Thyroid gland (tissue), 4 donors: ENCODE measurements at regions of chr17 and their contacts with region 1.

Region 1: DNA sequence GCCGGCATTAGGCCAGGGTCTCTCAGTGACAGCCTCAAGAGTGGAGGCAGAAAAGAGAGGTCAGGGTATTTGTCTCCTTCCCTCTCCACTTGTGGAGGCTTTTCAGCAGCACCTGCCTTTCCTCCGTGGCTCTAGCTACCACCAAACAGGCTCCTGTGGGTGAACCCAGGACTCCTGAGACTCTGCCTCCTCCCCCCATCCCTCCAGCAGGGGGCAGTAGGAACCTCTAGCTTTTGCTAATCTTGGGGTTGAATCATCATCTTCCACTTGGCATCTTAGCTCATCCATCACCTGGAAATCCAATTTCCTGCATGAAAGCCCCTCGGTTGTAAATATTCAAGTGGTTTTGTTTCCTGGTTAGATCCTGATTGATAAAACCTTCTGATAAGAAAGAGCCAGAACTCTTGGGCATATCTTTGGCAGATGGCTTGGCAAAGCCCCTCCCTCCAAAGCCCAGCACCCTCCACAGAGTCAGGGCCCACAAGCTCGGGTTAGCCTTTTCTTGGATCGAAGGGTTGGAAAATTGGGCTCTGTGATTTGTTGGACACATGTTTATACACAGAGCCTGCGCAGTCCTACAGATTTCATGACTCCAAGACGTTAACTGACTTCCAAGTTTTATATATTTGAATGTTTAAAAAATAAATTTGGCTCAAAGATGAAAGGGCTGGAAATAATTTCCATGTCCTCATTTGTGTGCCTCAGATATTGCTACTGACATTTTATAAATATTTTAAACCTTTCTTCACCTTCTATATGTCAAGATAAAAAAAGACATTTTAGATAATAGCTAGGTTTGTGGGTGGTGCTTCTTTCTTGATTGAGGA is 322.1 kb downstream of the MAP2K4 start:
- DNase-seq: peak; percentile 44 to 63
- H3K4me3 ChIP-seq: no peak overlapping the region
- H3K27ac ChIP-seq: no peak overlapping the region
- H3K4me1 ChIP-seq: no peaks in the 10 kb centered on the region
- H3K27me3 ChIP-seq: no peaks in the 10 kb centered on the region
- CTCF ChIP-seq: peak in 3 of 6 experiments; percentile 37 to 44 (median 38)
- POLR2A ChIP-seq: no peak

Region 2: GRCh38 chr17:12421646-12422306 is 79.0 kb after region 1 on chr17:
- intact Hi-C with region 1: no loop called
- DNase-seq: no peak
- H3K4me3 ChIP-seq: no peak overlapping the region
- H3K27ac ChIP-seq: peak overlapping the region; percentile 55 to 73 (median 58)
- H3K4me1 ChIP-seq: peaks cover 27 to 33% of the 10 kb centered on the region in 2 donors
- H3K27me3 ChIP-seq: no peaks in the 10 kb centered on the region
- CTCF ChIP-seq: no peak
- POLR2A ChIP-seq: no peak

Region 3: GRCh38 chr17:12566291-12566690 is 223.5 kb after region 1 on chr17:
- intact Hi-C with region 1: no loop called
- DNase-seq: no peak
- H3K4me3 ChIP-seq: no peak overlapping the region
- H3K27ac ChIP-seq: peak overlapping the region in 1 of 3 donors; percentile 43
- H3K4me1 ChIP-seq: peaks cover 0 to 24% of the 10 kb centered on the region in 2 donors
- H3K27me3 ChIP-seq: no peaks in the 10 kb centered on the region
- CTCF ChIP-seq: no peak
- POLR2A ChIP-seq: no peak

Region 4: GRCh38 chr17:12667299-12667958 is 324.6 kb after region 1 on chr17:
- intact Hi-C with region 1: loop called (anchors 10 kb)
- DNase-seq: peak; percentile 8 to 17
- H3K4me3 ChIP-seq: no peak overlapping the region
- H3K27ac ChIP-seq: no peak overlapping the region
- H3K4me1 ChIP-seq: peaks cover 3 to 10% of the 10 kb centered on the region in 2 donors
- H3K27me3 ChIP-seq: peaks cover 3% of the 10 kb centered on the region
- CTCF ChIP-seq: peak in 4 of 6 experiments; percentile 33 to 68 (median 53)
- POLR2A ChIP-seq: no peak

Region 5: GRCh38 chr17:12691182-12691581 is 348.4 kb after region 1 on chr17:
- intact Hi-C with region 1: no loop called
- DNase-seq: no peak
- H3K4me3 ChIP-seq: no peak overlapping the region
- H3K27ac ChIP-seq: no peak overlapping the region
- H3K4me1 ChIP-seq: no peaks in the 10 kb centered on the region
- H3K27me3 ChIP-seq: no peaks in the 10 kb centered on the region
- CTCF ChIP-seq: no peak
- POLR2A ChIP-seq: no peak